CD8-positive, alpha-beta T cell (primary cell): ENCODE measurements at regions of chr1 and their contacts with region 1.

Region 1: DNA sequence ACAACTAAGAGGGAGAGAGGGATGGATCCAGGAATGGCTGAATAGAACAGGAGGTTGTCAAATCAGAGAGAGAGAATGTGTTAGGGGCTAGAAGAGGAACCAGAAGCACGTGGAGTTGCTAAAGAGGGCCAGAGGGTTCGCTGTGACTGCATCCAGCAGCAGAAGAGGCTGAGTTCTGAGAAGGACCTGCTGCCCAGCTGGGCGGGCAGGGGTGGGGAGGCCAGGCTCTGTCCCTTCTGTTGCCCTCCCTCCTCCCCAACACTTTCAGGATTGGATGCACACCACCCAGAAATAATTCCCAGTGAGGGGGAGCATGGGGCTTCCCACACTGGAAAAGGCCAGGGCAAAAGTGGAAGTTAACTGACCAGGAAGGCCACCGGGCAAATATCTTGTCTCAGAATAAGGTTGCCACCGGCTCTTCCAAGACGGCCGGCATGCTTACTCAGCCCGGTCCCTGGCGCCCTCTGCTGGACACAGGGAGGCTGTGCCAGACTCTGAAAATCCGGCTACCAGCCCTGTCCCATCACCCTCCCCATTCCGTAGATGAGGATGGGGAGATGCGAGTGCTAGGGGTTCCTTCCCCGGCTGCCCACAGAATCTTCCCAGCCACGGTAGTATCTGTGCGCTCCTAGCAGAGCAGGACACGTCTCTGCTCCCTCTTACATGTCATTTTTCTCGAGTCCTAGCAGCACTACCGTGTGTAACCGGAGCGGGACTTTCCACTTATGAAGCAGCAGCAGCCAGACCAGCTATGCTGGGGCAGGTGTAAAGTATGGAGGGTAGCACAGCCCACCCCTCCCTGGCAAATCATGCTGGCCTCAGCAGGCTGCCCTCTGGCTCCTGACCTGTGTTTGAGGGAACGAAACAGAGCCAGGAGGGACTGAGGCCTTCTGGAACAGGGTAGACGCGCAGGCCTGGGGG is 46.8 kb upstream of the A3GALT2 start:
- DNase-seq: peak; percentile 72 to 92 (median 86)
- ATAC-seq: peak; percentile 99
- H3K4me3 ChIP-seq: no peak overlapping the region
- H3K4me3 Mint-ChIP-seq: no peak overlapping the region
- H3K27ac ChIP-seq: no peak overlapping the region
- H3K27ac Mint-ChIP-seq: no peak overlapping the region
- H3K4me1 ChIP-seq: no peaks in the 10 kb centered on the region
- H3K4me1 Mint-ChIP-seq: peaks cover 1% of the 10 kb centered on the region
- H3K27me3 ChIP-seq: no peaks in the 10 kb centered on the region
- H3K27me3 Mint-ChIP-seq: no peaks in the 10 kb centered on the region
- CTCF ChIP-seq: peak; percentile 86

Region 2: GRCh38 chr1:32521165-32521564 is 846.6 kb before region 1 on chr1:
- CTCF ChIA-PET with region 1: no interaction called
- POLR2A ChIA-PET with region 1: no interaction called
- intact Hi-C with region 1: loop called in 1 of 2 experiments (anchors 5 kb)
- DNase-seq: no peak
- ATAC-seq: no peak
- H3K4me3 ChIP-seq: no peak overlapping the region
- H3K4me3 Mint-ChIP-seq: peak overlapping the region; percentile 78
- H3K27ac ChIP-seq: no peak overlapping the region
- H3K27ac Mint-ChIP-seq: no peak overlapping the region
- H3K4me1 ChIP-seq: no peaks in the 10 kb centered on the region
- H3K4me1 Mint-ChIP-seq: peaks cover 7% of the 10 kb centered on the region
- H3K27me3 ChIP-seq: peaks cover 0 to 3% of the 10 kb centered on the region in 2 experiments
- H3K27me3 Mint-ChIP-seq: peaks cover 7% of the 10 kb centered on the region
- CTCF ChIP-seq: no peak

Region 3: GRCh38 chr1:32933742-32934322 is 433.9 kb before region 1 on chr1:
- CTCF ChIA-PET with region 1: no interaction called
- POLR2A ChIA-PET with region 1: no interaction called
- intact Hi-C with region 1: loop called in 1 of 2 experiments (anchors 1 kb)
- DNase-seq: no peak
- ATAC-seq: no peak
- H3K4me3 ChIP-seq: no peak overlapping the region
- H3K4me3 Mint-ChIP-seq: no peak overlapping the region
- H3K27ac ChIP-seq: no peak overlapping the region
- H3K27ac Mint-ChIP-seq: no peak overlapping the region
- H3K4me1 ChIP-seq: no peaks in the 10 kb centered on the region
- H3K4me1 Mint-ChIP-seq: no peaks in the 10 kb centered on the region
- H3K27me3 ChIP-seq: no peaks in the 10 kb centered on the region
- H3K27me3 Mint-ChIP-seq: no peaks in the 10 kb centered on the region
- CTCF ChIP-seq: no peak

Region 4: DNA sequence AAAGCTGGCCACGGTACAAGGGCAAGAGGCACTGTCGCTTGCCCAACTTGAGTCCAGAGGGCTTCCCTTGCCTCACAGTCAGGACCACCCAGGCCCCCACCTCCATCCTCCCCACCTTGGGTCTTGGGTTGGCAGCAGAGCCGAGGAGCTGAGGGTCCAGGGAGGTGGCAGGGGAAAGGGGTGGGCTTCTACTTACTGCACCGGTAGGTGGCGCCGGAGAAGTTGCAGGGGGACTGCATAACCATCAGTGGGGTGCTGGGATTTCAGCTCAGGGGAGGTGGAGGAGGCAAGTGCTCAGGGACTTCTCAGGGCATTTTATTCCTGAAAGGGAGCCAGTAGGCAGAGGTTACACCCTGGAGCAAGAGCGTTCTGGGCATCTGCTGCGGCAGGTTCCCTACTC is 229.9 kb before region 1 on chr1:
- CTCF ChIA-PET with region 1: interaction called, 3 read pairs
- POLR2A ChIA-PET with region 1: no interaction called
- intact Hi-C with region 1: loop called (anchors 2 to 5 kb)
- DNase-seq: peak in 8 of 9 experiments; percentile 11 to 61 (median 50)
- ATAC-seq: peak; percentile 62
- H3K4me3 ChIP-seq: no peak overlapping the region
- H3K4me3 Mint-ChIP-seq: no peak overlapping the region
- H3K27ac ChIP-seq: no peak overlapping the region
- H3K27ac Mint-ChIP-seq: no peak overlapping the region
- H3K4me1 ChIP-seq: no peaks in the 10 kb centered on the region
- H3K4me1 Mint-ChIP-seq: peaks cover 6% of the 10 kb centered on the region
- H3K27me3 ChIP-seq: no peaks in the 10 kb centered on the region
- H3K27me3 Mint-ChIP-seq: no peaks in the 10 kb centered on the region
- CTCF ChIP-seq: peak; percentile 36

Region 5: DNA sequence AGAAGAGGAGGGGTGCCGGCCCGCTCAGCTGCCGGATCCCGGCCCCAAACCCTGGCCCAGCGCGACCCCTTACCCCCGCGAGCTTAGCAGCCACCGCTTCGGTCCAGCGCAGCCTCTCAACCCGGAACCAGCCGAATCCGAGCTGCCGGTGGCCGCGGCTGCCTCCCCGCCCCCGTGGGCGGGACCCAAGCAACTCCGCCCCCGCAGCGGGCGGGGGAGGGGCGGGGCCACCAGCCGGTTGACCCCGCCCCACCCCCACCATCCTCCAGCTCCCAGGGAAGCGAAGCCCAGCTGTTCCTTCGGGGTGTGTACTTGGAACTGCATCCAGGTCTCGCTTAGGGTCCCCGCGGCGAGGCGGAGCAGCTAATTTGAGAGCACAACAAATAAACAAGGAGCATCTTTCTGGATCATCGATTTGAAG is 185.8 kb before region 1 on chr1 and contains the start of gene TRIM62:
- CTCF ChIA-PET with region 1: no interaction called
- POLR2A ChIA-PET with region 1: no interaction called
- intact Hi-C with region 1: no loop called
- DNase-seq: peak; percentile 48 to 88 (median 74)
- ATAC-seq: peak; percentile 74
- H3K4me3 ChIP-seq: peak within 1 kb of the TSS; percentile 82 to 85
- H3K4me3 Mint-ChIP-seq: peak within 1 kb of the TSS; percentile 88
- H3K27ac ChIP-seq: peak within 1 kb of the TSS in 1 of 2 experiments; percentile 36
- H3K27ac Mint-ChIP-seq: peak within 1 kb of the TSS; percentile 74
- H3K4me1 ChIP-seq: peaks cover 22% of the 10 kb centered on the region
- H3K4me1 Mint-ChIP-seq: peaks cover 31% of the 10 kb centered on the region
- H3K27me3 ChIP-seq: no peaks in the 10 kb centered on the region
- H3K27me3 Mint-ChIP-seq: peaks cover 6% of the 10 kb centered on the region
- CTCF ChIP-seq: no peak
- total RNA-seq, gene TRIM62: 14.3 to 14.8 TPM

Region 6: DNA sequence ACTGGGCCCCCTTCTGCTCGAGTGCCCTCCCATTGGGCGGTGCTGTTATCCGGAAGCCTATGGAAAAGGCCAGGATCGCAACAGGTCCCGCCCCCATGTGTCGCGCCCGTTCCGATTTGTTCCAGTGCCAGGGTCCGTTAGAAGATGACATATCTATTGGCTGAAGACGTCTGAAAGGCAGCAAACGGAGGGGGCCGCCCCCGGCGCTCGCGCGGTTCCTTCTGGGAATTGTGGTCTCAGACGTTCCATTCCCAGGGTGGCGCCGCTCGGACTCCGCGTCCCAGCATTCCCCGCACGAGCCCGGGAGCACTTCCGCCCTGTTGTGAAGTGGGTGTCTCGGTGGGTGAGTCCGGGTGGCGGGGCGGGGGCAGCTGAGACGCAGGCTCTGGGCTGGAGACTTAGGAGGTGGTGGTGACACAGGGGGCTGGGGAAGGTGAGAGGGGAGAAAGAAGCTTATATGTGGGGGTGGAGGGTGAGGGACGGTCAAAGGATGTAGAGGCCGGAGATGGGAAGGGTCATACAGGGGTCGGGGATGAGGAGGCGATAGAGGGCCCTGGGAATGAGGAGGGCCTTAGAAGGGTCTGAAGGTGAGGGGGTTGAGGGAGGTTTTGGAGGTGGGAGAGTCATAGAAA is 104.7 kb after region 1 on chr1 and contains the start of gene ZSCAN20:
- CTCF ChIA-PET with region 1: no interaction called
- POLR2A ChIA-PET with region 1: no interaction called
- intact Hi-C with region 1: loop called in 1 of 2 experiments (anchors 2 kb)
- DNase-seq: peak; percentile 59 to 92 (median 84)
- ATAC-seq: peak; percentile 98
- H3K4me3 ChIP-seq: peak within 1 kb of the TSS; percentile 29 to 49
- H3K4me3 Mint-ChIP-seq: peak within 1 kb of the TSS; percentile 87
- H3K27ac ChIP-seq: peak within 1 kb of the TSS in 1 of 2 experiments; percentile 67
- H3K27ac Mint-ChIP-seq: peak within 1 kb of the TSS; percentile 80
- H3K4me1 ChIP-seq: peaks cover 10% of the 10 kb centered on the region
- H3K4me1 Mint-ChIP-seq: peaks cover 31% of the 10 kb centered on the region
- H3K27me3 ChIP-seq: no peaks in the 10 kb centered on the region
- H3K27me3 Mint-ChIP-seq: no peaks in the 10 kb centered on the region
- CTCF ChIP-seq: no peak
- total RNA-seq, gene ZSCAN20: 0.19 TPM